CD4-positive, alpha-beta T cell (primary cell): ENCODE measurements at regions of chr11 and their contacts with region 1.

Region 1: DNA sequence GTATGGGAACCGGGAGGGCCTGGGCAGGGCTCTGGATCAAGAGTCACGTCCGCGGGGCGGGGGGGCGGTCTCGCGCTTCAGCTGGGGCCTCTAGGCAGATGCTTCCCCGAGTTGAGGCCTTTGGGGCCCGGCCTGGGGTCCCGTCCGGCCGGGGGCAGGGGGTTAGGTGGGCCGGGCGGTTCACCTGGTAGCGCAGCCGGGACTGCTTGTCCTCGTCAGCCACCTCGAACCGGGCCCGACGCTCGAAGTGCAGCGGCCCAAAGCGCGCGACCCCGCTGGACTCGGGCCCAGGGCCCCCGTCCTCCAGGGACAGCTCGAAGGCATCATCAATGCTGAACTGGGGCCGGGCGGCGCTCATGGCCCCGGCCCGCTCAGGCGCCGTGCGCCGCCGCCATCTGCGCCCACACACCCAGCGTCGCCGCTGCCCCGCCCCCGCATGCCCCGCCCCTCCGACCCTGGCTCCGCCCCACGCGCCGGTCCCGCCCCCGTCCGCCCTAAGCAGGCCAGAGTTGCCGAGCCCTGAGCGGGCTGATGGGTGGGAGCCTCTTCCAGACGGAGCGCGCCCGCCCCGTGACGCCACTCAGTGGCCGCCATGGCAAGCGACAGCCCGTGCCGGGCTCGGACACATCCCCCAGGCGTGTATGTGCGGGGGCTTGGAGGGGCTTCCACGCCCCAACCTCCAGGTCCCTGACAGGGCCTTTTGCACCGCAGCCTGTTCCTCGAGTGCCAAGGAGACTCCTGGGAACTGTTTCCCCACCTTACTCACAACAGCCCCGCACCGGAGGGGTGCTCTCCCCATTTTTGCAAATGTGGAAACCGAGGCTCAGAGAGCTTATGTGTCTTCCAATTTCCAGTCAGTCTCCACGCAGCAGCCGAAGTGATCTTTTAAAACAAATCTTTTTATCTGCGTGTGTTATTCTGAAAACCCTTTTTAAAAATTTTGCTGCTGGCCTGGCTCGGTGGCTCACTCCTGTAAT is at the start of gene TMEM134:
- DNase-seq: peak; percentile 86 to 96 (median 92)
- ATAC-seq: peak; percentile 71
- H3K4me3 ChIP-seq: peak within 1 kb of the TSS; percentile 83
- H3K4me3 Mint-ChIP-seq: peak within 1 kb of the TSS; percentile 91
- H3K27ac ChIP-seq: peak within 1 kb of the TSS; percentile 66 to 81
- H3K27ac Mint-ChIP-seq: peak within 1 kb of the TSS; percentile 88
- H3K4me1 ChIP-seq: peaks cover 56% of the 10 kb centered on the region
- H3K4me1 Mint-ChIP-seq: peaks cover 42% of the 10 kb centered on the region
- H3K27me3 ChIP-seq: no peaks in the 10 kb centered on the region
- H3K27me3 Mint-ChIP-seq: no peaks in the 10 kb centered on the region
- CTCF ChIP-seq: no peak
- total RNA-seq, gene TMEM134: 49.9 to 52.4 TPM

Region 2: GRCh38 chr11:67391304-67392132 is 77.6 kb before region 1 on chr11 and contains the start of gene RAD9A:
- CTCF ChIA-PET with region 1: interaction called, 3 read pairs
- POLR2A ChIA-PET with region 1: interaction called, 10 read pairs
- intact Hi-C with region 1: loop called (anchors 1 kb)
- DNase-seq: peak; percentile 82 to 97 (median 90)
- ATAC-seq: peak; percentile 83
- H3K4me3 ChIP-seq: peak within 1 kb of the TSS; percentile 90
- H3K4me3 Mint-ChIP-seq: peak within 1 kb of the TSS; percentile 88
- H3K27ac ChIP-seq: peak within 1 kb of the TSS; percentile 55 to 77
- H3K27ac Mint-ChIP-seq: peak within 1 kb of the TSS; percentile 76
- H3K4me1 ChIP-seq: peaks cover 42% of the 10 kb centered on the region
- H3K4me1 Mint-ChIP-seq: peaks cover 38% of the 10 kb centered on the region
- H3K27me3 ChIP-seq: no peaks in the 10 kb centered on the region
- H3K27me3 Mint-ChIP-seq: no peaks in the 10 kb centered on the region
- CTCF ChIP-seq: no peak
- total RNA-seq, gene RAD9A: 19.3 to 20.3 TPM

Region 3: GRCh38 chr11:67409261-67409666 is 59.9 kb before region 1 on chr11:
- CTCF ChIA-PET with region 1: interaction called, 4 read pairs
- POLR2A ChIA-PET with region 1: interaction called, 30 read pairs
- intact Hi-C with region 1: no loop called
- DNase-seq: peak in 13 of 14 experiments; percentile 45 to 92 (median 76)
- ATAC-seq: peak; percentile 62
- H3K4me3 ChIP-seq: peak overlapping the region; percentile 100
- H3K4me3 Mint-ChIP-seq: peak overlapping the region; percentile 88
- H3K27ac ChIP-seq: peak overlapping the region; percentile 75 to 84
- H3K27ac Mint-ChIP-seq: peak overlapping the region; percentile 98
- H3K4me1 ChIP-seq: peaks cover 98% of the 10 kb centered on the region
- H3K4me1 Mint-ChIP-seq: peaks cover 91% of the 10 kb centered on the region
- H3K27me3 ChIP-seq: no peaks in the 10 kb centered on the region
- H3K27me3 Mint-ChIP-seq: no peaks in the 10 kb centered on the region
- CTCF ChIP-seq: no peak

Region 4: DNA sequence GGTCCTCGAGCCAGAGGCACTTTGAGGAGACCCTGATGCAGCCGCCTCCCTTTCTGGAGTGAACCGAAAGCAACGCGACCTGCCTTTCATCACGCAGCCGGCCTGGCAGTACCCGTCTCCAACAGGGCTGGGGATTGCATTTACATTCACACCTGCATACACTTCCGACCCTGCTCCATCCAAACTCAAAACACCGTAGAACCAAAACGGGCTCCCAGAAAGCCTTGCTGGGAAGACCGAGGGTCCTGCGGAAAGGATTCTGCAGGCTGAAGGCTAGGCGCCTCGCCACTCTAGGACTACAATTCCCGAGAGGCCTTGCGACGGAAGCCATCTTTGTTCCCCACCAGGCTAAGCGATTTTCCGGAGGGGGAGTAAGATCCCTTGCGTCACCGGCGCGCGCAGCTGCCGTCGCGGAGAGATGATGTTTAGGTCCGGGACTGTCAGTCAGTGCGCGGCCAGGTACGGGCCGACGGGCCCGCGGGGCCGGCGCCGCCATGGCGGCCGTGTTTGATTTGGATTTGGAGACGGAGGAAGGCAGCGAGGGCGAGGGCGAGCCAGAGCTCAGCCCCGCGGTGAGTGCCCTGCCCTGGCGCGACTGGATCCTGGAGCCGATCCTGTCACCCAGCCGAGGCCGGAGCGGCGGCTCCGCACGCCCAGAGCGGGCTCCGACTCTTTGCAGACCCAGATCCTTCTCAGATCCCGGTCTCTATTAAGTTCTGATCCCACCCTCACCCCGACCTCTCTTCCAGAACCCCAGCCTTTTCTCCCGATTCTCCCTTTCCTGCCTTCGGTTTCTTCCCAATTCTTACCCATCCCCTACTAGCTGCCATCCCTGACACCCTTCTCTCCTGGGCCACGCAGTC is 40.8 kb before region 1 on chr11 and contains the start of gene RPS6KB2:
- CTCF ChIA-PET with region 1: no interaction called
- POLR2A ChIA-PET with region 1: interaction called, 22 read pairs
- intact Hi-C with region 1: loop called (anchors 1 kb)
- DNase-seq: peak; percentile 96 to 100 (median 99)
- ATAC-seq: peak; percentile 84
- H3K4me3 ChIP-seq: peak within 1 kb of the TSS; percentile 92
- H3K4me3 Mint-ChIP-seq: peak within 1 kb of the TSS; percentile 98
- H3K27ac ChIP-seq: peak within 1 kb of the TSS; percentile 85 to 86
- H3K27ac Mint-ChIP-seq: peak within 1 kb of the TSS; percentile 96
- H3K4me1 ChIP-seq: peaks cover 59% of the 10 kb centered on the region
- H3K4me1 Mint-ChIP-seq: peaks cover 33% of the 10 kb centered on the region
- H3K27me3 ChIP-seq: no peaks in the 10 kb centered on the region
- H3K27me3 Mint-ChIP-seq: no peaks in the 10 kb centered on the region
- CTCF ChIP-seq: no peak
- total RNA-seq, gene RPS6KB2: 69.3 to 72.0 TPM

Region 5: DNA sequence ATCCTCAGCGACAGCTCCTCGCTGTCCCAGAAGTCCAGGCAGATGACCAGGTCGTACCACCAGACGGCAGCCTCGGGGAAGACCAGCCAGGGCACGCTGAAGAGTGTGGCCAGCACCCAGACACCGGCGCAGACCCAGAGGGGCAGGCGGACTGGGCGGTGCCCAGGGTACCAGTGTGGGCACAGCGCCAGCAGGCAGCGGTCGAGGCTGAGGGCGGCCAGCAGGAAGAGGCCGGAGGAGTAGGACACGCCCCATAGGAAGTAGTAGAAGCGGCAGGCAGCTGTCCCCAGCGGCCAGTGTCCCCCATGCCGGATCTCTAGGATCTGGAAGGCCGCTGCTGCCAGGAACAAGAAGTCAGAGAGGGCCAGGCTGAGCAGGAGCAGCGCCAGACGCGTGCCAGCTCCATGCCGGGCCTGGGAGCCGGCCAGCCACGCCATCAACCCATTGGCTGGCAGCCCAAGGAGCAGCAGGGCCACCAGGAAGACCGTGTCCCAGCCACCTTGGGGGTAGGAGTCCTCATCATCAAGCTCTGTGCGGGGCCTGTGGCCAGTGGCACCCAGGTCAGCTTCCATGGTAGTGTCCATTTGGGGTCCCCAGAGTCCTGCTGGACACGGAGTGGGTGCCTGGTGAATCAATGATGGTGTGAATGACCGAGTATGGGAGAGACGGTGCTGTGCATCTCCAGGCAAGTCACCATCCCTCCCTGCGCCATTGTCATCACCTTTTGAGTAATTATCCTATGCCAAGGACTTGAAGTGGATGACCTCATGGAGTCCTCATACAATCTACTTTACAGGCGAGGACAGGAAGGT is 16.8 kb before region 1 on chr11 and contains the start of gene GPR152:
- CTCF ChIA-PET with region 1: interaction called, 3 read pairs
- POLR2A ChIA-PET with region 1: interaction called, 6 read pairs
- intact Hi-C with region 1: loop called in 1 of 2 experiments (anchors 2 kb)
- DNase-seq: peak in 1 of 14 experiments; percentile 12
- ATAC-seq: no peak
- H3K4me3 ChIP-seq: no peak within 1 kb of the TSS
- H3K4me3 Mint-ChIP-seq: no peak within 1 kb of the TSS
- H3K27ac ChIP-seq: no peak within 1 kb of the TSS
- H3K27ac Mint-ChIP-seq: no peak within 1 kb of the TSS
- H3K4me1 ChIP-seq: peaks cover 48% of the 10 kb centered on the region
- H3K4me1 Mint-ChIP-seq: peaks cover 24% of the 10 kb centered on the region
- H3K27me3 ChIP-seq: no peaks in the 10 kb centered on the region
- H3K27me3 Mint-ChIP-seq: no peaks in the 10 kb centered on the region
- CTCF ChIP-seq: no peak
- total RNA-seq, gene GPR152: not detected

Region 6: DNA sequence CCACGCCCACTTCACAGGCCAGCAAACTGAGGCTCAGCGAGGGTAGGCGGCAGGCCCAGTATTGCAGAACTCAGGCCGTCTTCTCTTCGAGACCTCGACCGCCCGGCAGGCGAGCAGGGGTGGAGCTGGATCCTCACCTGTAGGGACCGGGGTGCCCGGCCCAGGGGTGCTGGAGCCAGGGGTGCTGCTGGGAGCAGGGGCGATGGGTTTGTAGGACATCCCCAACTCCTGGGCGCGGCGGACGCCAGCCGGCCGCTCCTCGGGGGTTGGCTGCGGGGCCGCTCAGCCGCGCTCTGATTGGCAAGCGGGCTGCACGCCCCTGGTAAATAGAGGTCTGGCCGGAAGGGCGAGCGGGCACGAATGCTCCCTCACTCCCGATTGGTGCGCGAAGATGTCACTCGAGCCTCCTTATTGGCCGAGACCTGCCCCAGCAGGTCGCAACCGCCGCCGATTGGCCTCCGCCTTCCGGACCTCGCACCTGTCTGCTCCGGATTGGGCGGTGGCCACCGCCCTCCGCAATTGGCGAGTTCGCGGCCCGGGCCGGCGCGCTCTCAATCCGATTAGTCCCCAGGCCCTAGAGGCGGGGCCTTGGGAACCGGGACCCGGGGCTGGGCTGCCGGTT is 38.9 kb after region 1 on chr11 and contains the start of gene CDK2AP2:
- CTCF ChIA-PET with region 1: interaction called, 8 read pairs
- POLR2A ChIA-PET with region 1: interaction called, 7 read pairs
- intact Hi-C with region 1: loop called (anchors 1 kb)
- DNase-seq: peak; percentile 91 to 99 (median 97)
- ATAC-seq: peak; percentile 71
- H3K4me3 ChIP-seq: peak within 1 kb of the TSS; percentile 76
- H3K4me3 Mint-ChIP-seq: peak within 1 kb of the TSS; percentile 93
- H3K27ac ChIP-seq: peak within 1 kb of the TSS; percentile 87 to 97
- H3K27ac Mint-ChIP-seq: peak within 1 kb of the TSS; percentile 98
- H3K4me1 ChIP-seq: peaks cover 50% of the 10 kb centered on the region
- H3K4me1 Mint-ChIP-seq: peaks cover 44% of the 10 kb centered on the region
- H3K27me3 ChIP-seq: peaks cover 0 to 9% of the 10 kb centered on the region in 2 experiments
- H3K27me3 Mint-ChIP-seq: no peaks in the 10 kb centered on the region
- CTCF ChIP-seq: no peak
- total RNA-seq, gene CDK2AP2: 19.5 to 22.0 TPM